MCF 10A (cell line): ENCODE measurements at regions of chr4 and their contacts with region 1.

Region 1: GRCh38 chr4:138308405-138308804 is 66.3 kb upstream of the SLC7A11 start:
- DNase-seq: peak; percentile 96
- H3K4me3 Mint-ChIP-seq: peak overlapping the region; percentile 2
- H3K27ac Mint-ChIP-seq: peak overlapping the region; percentile 89
- H3K4me1 Mint-ChIP-seq: peaks cover 35% of the 10 kb centered on the region
- H3K27me3 Mint-ChIP-seq: no peaks in the 10 kb centered on the region
- CTCF ChIP-seq: no peak

Region 2: DNA sequence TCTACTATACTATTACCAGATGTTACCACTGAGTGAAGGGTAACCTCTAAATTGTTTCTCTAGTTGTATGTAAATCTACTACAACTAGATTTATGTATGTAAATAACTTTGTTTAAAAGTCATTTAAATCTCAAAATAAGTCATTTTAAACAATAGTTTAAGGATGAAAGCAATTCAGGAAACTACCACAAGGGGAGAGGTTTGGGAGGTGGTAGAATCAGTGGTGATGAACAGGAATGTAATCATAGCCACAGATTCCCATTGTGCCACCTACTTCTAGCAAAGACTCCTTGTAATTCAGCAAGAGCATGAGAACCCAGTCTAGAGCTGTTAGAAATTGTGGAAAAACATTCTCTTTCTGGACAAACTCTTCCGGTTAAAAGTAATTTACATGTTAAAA is 300.8 kb before region 1 on chr4:
- CTCF ChIA-PET with region 1: no interaction called
- POLR2A ChIA-PET with region 1: no interaction called
- intact Hi-C with region 1: no loop called
- DNase-seq: peak; percentile 13
- H3K4me3 Mint-ChIP-seq: no peak overlapping the region
- H3K27ac Mint-ChIP-seq: no peak overlapping the region
- H3K4me1 Mint-ChIP-seq: peaks cover 6% of the 10 kb centered on the region
- H3K27me3 Mint-ChIP-seq: no peaks in the 10 kb centered on the region
- CTCF ChIP-seq: peak; percentile 25

Region 3: DNA sequence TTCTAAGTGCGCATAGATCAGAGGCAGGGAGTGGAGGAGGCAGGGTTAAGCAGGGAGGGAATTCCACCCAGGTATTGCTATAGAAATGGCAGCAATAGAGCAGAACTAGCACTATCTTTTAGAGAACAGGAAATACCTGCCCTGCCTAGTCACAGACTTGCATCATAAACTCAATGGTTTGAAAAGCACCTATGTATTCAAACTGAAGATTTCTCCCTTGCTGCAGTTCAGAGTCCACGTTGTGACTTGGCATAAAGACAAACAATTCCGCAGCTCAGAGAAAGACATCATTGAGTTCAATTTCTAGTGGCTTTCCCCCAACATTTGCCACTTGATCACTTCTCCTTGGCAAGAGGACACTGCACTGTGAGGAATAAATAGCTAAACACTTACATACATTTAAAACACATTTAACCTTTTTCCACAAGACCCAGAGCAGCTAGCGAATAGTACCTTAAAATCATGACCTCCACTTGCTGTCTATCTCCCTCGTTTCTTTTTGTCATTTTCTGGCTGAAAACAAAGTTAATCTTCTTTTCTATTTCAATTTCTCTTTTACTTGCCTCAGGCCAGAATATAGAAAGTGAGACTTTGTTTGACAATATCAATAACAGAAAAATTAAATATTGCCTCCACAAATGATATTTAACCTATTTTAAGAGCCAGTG is 108.7 kb before region 1 on chr4:
- CTCF ChIA-PET with region 1: no interaction called
- POLR2A ChIA-PET with region 1: interaction called, 11 read pairs
- intact Hi-C with region 1: no loop called
- DNase-seq: peak; percentile 87
- H3K4me3 Mint-ChIP-seq: peak overlapping the region; percentile 69
- H3K27ac Mint-ChIP-seq: peak overlapping the region; percentile 97
- H3K4me1 Mint-ChIP-seq: peaks cover 26% of the 10 kb centered on the region
- H3K27me3 Mint-ChIP-seq: no peaks in the 10 kb centered on the region
- CTCF ChIP-seq: no peak

Region 4: GRCh38 chr4:138297743-138298405 is 10.5 kb before region 1 on chr4:
- CTCF ChIA-PET with region 1: no interaction called
- POLR2A ChIA-PET with region 1: interaction called, 10 read pairs
- intact Hi-C with region 1: no loop called
- DNase-seq: no peak
- H3K4me3 Mint-ChIP-seq: no peak overlapping the region
- H3K27ac Mint-ChIP-seq: no peak overlapping the region
- H3K4me1 Mint-ChIP-seq: no peaks in the 10 kb centered on the region
- H3K27me3 Mint-ChIP-seq: no peaks in the 10 kb centered on the region
- CTCF ChIP-seq: no peak

Region 5: DNA sequence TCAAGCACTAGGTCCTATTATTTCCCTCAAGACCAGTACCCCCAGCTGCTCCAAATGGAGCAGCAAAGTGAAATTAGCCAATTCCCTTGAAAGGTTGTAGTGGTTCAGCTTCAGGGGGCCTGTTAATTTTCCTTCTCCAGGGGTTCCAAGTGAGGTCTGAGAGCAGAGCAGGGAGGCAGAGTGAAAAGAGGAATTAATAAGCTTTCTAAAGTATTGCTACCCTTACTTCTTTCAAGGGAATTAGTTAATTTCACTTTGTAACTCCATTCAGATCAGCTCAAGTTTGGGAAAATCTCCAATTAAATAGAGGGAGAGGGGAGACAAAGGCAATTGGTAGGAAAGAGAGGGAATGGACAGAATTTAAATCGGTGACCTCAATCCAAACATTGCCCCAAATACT is 12.4 kb after region 1 on chr4:
- CTCF ChIA-PET with region 1: no interaction called
- POLR2A ChIA-PET with region 1: no interaction called
- intact Hi-C with region 1: no loop called
- DNase-seq: no peak
- H3K4me3 Mint-ChIP-seq: no peak overlapping the region
- H3K27ac Mint-ChIP-seq: no peak overlapping the region
- H3K4me1 Mint-ChIP-seq: no peaks in the 10 kb centered on the region
- H3K27me3 Mint-ChIP-seq: no peaks in the 10 kb centered on the region
- CTCF ChIP-seq: no peak